ENCODE measurements at regions of chr5 and their contacts with region 1.

Region 1: DNA sequence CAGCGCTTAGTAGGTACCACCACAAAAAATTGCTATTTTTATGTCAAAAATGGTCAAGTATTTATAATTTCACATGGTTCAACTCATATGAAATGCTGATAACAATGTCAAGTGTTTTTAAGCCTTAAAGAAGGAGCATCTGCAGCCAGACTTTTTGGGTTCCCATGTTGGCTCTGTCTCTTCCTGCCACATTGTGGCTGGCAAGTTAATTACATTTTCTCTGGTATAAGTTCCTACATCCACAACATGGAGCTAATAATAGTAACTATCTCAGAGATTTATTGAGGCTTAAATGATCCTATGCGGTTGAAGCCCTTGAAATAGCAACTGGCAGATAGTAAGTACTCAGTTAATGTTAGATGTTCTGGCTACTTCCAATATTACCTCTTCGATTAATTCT is 5.4 kb downstream of the ATP10B start:
- DNase-seq: no peak
- ATAC-seq: no peak

Region 2: GRCh38 chr5:160799184-160799583 is 47.5 kb before region 1 on chr5:
- intact Hi-C with region 1: loop called (anchors 1 kb)
- DNase-seq: no peak
- ATAC-seq: no peak

Region 3: GRCh38 chr5:160915851-160916250 is 69.2 kb after region 1 on chr5:
- intact Hi-C with region 1: no loop called
- DNase-seq: no peak
- ATAC-seq: no peak